HepG2 (cell line): ENCODE measurements at regions of chr17 and their contacts with region 1.

Region 1: DNA sequence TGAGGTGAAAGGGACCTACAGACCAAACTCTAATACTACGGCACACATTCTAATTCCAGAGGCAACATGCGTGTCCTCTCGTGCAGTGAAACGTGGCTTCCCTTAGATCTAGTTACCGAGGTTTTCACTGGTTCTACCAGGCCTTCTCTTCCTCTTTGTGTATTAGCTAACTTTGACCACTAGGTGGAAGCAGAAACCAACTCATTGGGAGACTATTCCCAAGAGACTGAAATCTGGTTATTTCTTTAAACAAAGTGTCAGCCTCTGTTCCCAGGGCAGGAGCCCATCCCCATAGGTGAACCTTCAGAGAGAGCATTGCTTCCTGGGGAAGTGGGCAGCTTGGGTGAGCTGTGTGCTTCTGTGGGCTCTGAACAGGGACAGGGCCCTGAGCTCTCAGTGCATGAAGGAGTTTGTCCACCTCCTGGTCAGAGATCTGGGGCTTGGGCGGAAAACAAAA is 19.7 kb upstream of the RCVRN start:
- DNase-seq: peak; percentile 66
- ATAC-seq: peak; percentile 85
- H3K4me3 ChIP-seq: no peak overlapping the region
- H3K27ac ChIP-seq: no peak overlapping the region
- H3K4me1 ChIP-seq: no peaks in the 10 kb centered on the region
- H3K27me3 ChIP-seq: peaks cover 3 to 8% of the 10 kb centered on the region in 2 experiments; a peak in 3 of 5 replicates
- CTCF ChIP-seq: peak; percentile 81
- EP300 ChIP-seq: no peak
- POLR2A ChIP-seq: no peak
- RAD21 ChIP-seq: 0 out of 2 replicates have a peak, but pooled peaks have one; percentile 17

Region 2: GRCh38 chr17:9104370-9105041 is 820.3 kb before region 1 on chr17:
- CTCF ChIA-PET with region 1: no interaction called
- POLR2A ChIA-PET with region 1: no interaction called
- in situ Hi-C with region 1: no loop called
- intact Hi-C with region 1: no loop called
- DNase-seq: no peak
- ATAC-seq: no peak
- H3K4me3 ChIP-seq: no peak overlapping the region
- H3K27ac ChIP-seq: no peak overlapping the region
- H3K4me1 ChIP-seq: no peaks in the 10 kb centered on the region
- H3K27me3 ChIP-seq: peaks cover 0 to 27% of the 10 kb centered on the region in 2 experiments
- CTCF ChIP-seq: no peak
- EP300 ChIP-seq: no peak
- POLR2A ChIP-seq: no peak
- RAD21 ChIP-seq: no peak

Region 3: DNA sequence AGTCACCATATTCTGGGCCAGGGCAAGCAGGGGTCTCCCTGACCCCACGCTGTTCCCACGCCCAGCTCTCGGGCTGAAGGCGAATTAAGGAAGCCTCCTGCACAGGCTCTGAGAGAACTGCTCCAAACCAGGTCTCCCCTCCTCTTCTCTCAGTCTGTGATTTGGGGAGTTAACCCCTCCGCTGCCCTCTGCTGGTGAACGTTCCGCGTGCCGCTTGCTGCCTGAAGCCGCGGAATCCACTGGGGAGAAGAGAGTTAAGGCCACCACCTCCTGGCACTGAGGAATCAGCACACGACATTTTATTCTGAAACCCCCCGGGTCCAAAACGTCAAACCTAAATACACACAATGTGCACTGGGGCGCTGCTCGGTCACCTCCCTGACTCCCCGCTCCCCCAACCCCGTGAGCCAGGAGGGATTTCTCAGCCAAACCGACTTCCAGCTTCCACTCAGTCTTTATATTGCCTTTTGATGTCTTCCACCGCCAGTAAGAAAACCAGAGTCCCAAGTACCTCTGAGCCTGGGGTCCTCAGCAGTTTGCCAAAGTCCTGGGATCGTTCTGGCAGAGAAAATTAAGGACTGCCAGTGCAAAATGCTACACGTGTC is 34.7 kb after region 1 on chr17:
- CTCF ChIA-PET with region 1: interaction called, 8 read pairs
- POLR2A ChIA-PET with region 1: no interaction called
- in situ Hi-C with region 1: no loop called
- intact Hi-C with region 1: loop called (anchors 1 kb)
- DNase-seq: peak; percentile 15
- ATAC-seq: peak; percentile 65
- H3K4me3 ChIP-seq: no peak overlapping the region
- H3K27ac ChIP-seq: no peak overlapping the region
- H3K4me1 ChIP-seq: no peaks in the 10 kb centered on the region
- H3K27me3 ChIP-seq: peaks cover 2 to 27% of the 10 kb centered on the region in 2 experiments; a peak in 2 of 5 replicates
- CTCF ChIP-seq: peak; percentile 56
- EP300 ChIP-seq: no peak
- POLR2A ChIP-seq: no peak
- RAD21 ChIP-seq: no peak

Region 4: DNA sequence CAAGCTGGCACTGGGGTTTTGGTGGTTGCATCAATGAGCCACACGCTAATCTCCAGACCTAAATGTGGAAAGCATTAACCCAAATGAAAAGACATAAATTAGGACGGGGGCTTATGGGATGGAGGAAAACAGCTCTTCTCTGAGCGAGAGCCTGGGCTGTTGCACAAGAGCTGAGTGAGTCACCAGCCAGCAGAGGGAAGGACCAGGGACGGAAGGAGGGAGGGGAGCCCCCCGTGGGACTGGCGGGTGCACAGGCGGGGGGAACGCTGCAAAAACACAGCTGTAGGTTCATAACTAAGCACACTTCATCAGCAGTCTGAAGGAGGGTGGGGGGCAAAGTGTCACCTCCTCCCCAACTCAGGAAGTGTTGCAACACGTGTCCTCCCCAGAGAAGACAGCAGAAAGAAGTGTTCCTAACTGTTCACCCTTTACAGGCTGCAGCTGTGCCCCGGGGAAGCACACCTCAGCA is 190.3 kb after region 1 on chr17:
- CTCF ChIA-PET with region 1: no interaction called
- POLR2A ChIA-PET with region 1: no interaction called
- in situ Hi-C with region 1: no loop called
- intact Hi-C with region 1: no loop called
- DNase-seq: no peak
- ATAC-seq: peak; percentile 68; the same call in 2 of the 3 replicates
- H3K4me3 ChIP-seq: no peak overlapping the region
- H3K27ac ChIP-seq: no peak overlapping the region
- H3K4me1 ChIP-seq: no peaks in the 10 kb centered on the region
- H3K27me3 ChIP-seq: peaks cover 0 to 18% of the 10 kb centered on the region in 2 experiments; a peak in 3 of 5 replicates
- CTCF ChIP-seq: no peak
- EP300 ChIP-seq: no peak
- POLR2A ChIP-seq: no peak
- RAD21 ChIP-seq: no peak